ENCODE measurements at regions of chr2 and their contacts with region 1.

Region 1: DNA sequence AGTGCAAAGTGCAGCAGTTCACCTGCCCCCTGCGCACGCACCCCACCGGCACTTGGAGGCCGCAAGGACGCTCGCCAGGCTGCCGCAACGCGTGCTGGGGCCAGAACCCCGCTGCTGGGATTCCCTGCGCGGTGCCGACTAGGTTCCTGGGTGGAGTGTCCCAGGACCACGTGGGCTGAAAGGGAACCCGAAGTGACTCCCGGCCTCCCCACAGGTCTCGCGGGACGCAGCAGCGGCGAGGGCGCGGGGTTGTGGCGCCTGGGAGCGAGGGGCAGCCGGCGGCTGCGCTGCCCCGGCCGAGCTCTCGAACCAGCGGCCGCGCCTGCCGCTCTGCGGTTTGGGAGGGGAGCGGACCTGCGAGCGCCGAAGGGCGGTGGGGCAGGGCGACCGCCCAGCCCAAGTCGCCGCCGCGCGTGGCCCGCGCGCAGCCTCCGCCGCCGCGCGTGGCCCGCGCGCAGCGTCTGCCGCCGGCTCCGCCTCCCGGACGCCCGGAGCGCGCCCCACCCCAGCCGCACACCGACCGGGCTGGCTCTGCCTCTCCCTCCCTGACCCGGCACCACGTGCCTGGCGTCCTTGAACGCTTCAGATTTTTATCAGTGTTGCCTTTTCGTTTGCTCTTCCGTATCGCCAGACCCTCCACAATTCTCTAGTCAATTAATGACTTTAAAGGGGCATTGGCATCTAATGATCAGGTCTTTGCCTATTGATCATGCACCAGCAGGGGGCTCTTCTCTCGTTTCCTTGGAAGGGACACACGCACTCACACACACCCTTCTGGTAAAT is at the start of gene FTCDNL1:
- DNase-seq: peak; percentile 55 to 83 (median 70)
- H3K4me3 ChIP-seq: peak within 1 kb of the TSS; percentile 56 to 91 (median 81)
- H3K27ac ChIP-seq: peak within 1 kb of the TSS; percentile 24 to 95 (median 89)
- H3K27me3 ChIP-seq: no peaks in the 10 kb centered on the region
- CTCF ChIP-seq: peak in 55 of 56 donors; percentile 39 to 76 (median 65)
- total RNA-seq, gene FTCDNL1: 7.2 to 25.1 (median 14.7) TPM

Region 2: GRCh38 chr2:199459286-199460016 is 391.5 kb before region 1 on chr2:
- intact Hi-C with region 1: loop called (anchors 5 to 10 kb)
- DNase-seq: peak; percentile 88 to 95 (median 92)
- H3K4me3 ChIP-seq: peak overlapping the region; percentile 61 to 100 (median 91)
- H3K27ac ChIP-seq: peak overlapping the region in 58 of 59 donors; percentile 65 to 96 (median 90)
- H3K27me3 ChIP-seq: peaks cover 0 to 69% (median 40%) of the 10 kb centered on the region in 45 donors
- CTCF ChIP-seq: peak in 28 of 56 donors; percentile 5 to 57 (median 20)

Region 3: GRCh38 chr2:199704358-199705238 is 146.3 kb before region 1 on chr2:
- intact Hi-C with region 1: loop called in 1 of 2 experiments (anchors 10 kb)
- DNase-seq: peak in 2 of 10 donors; percentile 27 to 33
- H3K4me3 ChIP-seq: no peak overlapping the region
- H3K27ac ChIP-seq: no peak overlapping the region
- H3K27me3 ChIP-seq: no peaks in the 10 kb centered on the region
- CTCF ChIP-seq: peak in 55 of 56 donors; percentile 23 to 84 (median 63)

Region 4: DNA sequence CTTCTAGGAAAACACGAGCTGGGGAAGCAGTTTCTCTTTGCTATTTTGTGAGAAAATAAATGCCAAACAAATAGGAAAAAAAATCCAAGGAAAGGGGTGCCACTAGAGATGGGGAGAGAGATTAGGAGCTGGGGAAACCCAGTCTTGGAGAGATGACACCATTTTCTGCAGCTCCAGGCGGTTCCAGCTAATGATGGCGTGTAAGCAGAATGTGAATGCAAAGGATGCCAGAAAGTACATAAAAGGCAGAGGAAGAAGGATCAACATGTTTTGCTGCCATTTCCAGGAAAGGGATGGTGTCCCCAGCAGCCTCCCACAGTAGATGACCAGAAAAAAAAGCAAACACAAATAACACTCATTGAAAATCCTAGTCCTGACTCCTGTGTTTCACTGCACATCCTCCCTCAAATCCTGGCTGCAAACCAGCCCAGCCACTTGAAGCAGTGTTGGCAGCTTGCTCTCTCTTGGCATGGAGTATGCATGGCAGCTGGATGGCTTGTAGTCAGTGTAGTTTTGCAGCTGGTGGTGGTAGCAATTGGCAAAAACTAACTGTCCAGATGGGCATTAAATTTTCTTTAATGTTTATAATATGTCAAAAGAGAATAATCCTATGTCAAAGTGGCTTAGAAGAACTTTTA is 93.6 kb before region 1 on chr2:
- intact Hi-C with region 1: loop called (anchors 2 kb)
- DNase-seq: peak; percentile 21 to 96 (median 90)
- H3K4me3 ChIP-seq: peak overlapping the region in 47 of 59 donors; percentile 3 to 62 (median 30)
- H3K27ac ChIP-seq: peak overlapping the region in 55 of 59 donors; percentile 19 to 87 (median 70)
- H3K27me3 ChIP-seq: no peaks in the 10 kb centered on the region
- CTCF ChIP-seq: peak in 18 of 56 donors; percentile 12 to 54 (median 30)

Region 5: GRCh38 chr2:199818026-199818425 is 32.9 kb before region 1 on chr2:
- intact Hi-C with region 1: no loop called
- DNase-seq: no peak
- H3K4me3 ChIP-seq: no peak overlapping the region
- H3K27ac ChIP-seq: no peak overlapping the region
- H3K27me3 ChIP-seq: no peaks in the 10 kb centered on the region
- CTCF ChIP-seq: no peak

Region 6: GRCh38 chr2:199833525-199833924 is 17.4 kb before region 1 on chr2:
- intact Hi-C with region 1: no loop called
- DNase-seq: peak in 8 of 10 donors; percentile 22 to 74 (median 50)
- H3K4me3 ChIP-seq: no peak overlapping the region
- H3K27ac ChIP-seq: peak overlapping the region in 58 of 59 donors; percentile 8 to 91 (median 76)
- H3K27me3 ChIP-seq: no peaks in the 10 kb centered on the region
- CTCF ChIP-seq: no peak

Region 7: GRCh38 chr2:199903111-199903510 is 52.2 kb after region 1 on chr2:
- intact Hi-C with region 1: loop called in 1 of 2 experiments (anchors 10 kb)
- DNase-seq: no peak
- H3K4me3 ChIP-seq: no peak overlapping the region
- H3K27ac ChIP-seq: no peak overlapping the region
- H3K27me3 ChIP-seq: no peaks in the 10 kb centered on the region
- CTCF ChIP-seq: no peak

Region 8: GRCh38 chr2:199940373-199940772 is 89.5 kb after region 1 on chr2:
- intact Hi-C with region 1: loop called in 1 of 2 experiments (anchors 5 kb)
- DNase-seq: no peak
- H3K4me3 ChIP-seq: no peak overlapping the region
- H3K27ac ChIP-seq: peak overlapping the region in 9 of 59 donors; percentile 2 to 45 (median 29)
- H3K27me3 ChIP-seq: no peaks in the 10 kb centered on the region
- CTCF ChIP-seq: peak in 54 of 56 donors; percentile 11 to 70 (median 51)